ENCODE measurements at regions of chr15 and their contacts with region 1.

Region 1: DNA sequence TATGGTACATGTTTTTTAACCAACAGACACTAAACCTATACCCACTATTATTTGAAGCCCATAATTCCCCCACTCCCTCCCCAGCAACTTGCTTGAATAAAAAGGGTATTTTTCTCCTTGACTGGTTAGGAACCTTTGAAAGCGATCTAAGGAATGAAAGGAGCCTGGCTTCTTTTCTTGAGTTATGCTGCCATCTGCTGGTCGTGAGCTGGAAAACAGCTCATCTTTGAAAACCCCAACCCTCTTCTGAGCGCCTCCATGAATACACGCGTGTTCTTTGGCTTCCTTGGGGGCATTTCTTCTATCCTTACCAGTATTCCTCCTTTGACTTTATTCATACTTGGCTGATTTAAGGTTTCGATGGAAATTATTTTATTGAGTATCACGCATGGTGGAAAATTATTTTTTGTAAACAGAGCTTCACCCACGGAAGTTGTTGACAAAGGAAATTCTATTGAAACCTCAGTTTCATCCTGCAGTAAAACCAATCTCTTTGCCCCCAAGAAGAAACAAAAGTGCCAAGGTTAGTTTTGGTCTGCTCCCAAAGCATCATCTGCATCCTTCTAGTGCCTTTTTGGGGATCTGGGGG is 171.6 kb downstream of the SV2B start:
- DNase-seq: peak; percentile 65
- H3K4me3 Mint-ChIP-seq: no peak overlapping the region
- H3K27ac Mint-ChIP-seq: no peak overlapping the region
- H3K4me1 Mint-ChIP-seq: peaks cover 8% of the 10 kb centered on the region
- H3K27me3 Mint-ChIP-seq: peaks cover 23% of the 10 kb centered on the region

Region 2: GRCh38 chr15:90902040-90902839 is 369.4 kb before region 1 on chr15:
- CTCF ChIA-PET with region 1: no interaction called
- POLR2A ChIA-PET with region 1: no interaction called
- DNase-seq: peak; percentile 77
- H3K4me3 Mint-ChIP-seq: peak overlapping the region; percentile 80
- H3K27ac Mint-ChIP-seq: peak overlapping the region; percentile 81
- H3K4me1 Mint-ChIP-seq: peaks cover 40% of the 10 kb centered on the region
- H3K27me3 Mint-ChIP-seq: no peaks in the 10 kb centered on the region

Region 3: GRCh38 chr15:91055548-91056331 is 215.9 kb before region 1 on chr15:
- CTCF ChIA-PET with region 1: interaction called, 67 read pairs
- POLR2A ChIA-PET with region 1: no interaction called
- DNase-seq: peak; percentile 38
- H3K4me3 Mint-ChIP-seq: no peak overlapping the region
- H3K27ac Mint-ChIP-seq: no peak overlapping the region
- H3K4me1 Mint-ChIP-seq: no peaks in the 10 kb centered on the region
- H3K27me3 Mint-ChIP-seq: peaks cover 74% of the 10 kb centered on the region

Region 4: DNA sequence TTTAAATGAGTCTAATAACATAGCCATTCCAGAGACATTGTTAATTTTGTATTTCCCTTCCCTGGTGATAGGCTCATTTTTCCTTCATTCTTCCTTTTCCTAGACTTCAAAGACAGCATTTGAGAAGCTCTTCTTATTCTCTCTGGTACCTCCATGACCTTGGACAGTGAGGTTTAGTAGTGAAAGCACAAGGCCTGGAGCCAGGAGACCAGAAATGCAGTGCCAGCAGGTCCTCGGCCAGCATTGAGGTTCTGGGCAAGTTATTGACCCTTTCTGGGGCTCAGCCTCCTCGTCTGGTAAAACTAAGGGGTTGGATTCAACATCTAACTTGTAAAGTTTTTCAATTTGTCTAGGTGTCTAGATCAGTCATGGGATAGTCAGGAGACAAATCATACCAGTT is 24.7 kb before region 1 on chr15:
- CTCF ChIA-PET with region 1: interaction called, 28 read pairs
- POLR2A ChIA-PET with region 1: no interaction called
- DNase-seq: no peak
- H3K4me3 Mint-ChIP-seq: no peak overlapping the region
- H3K27ac Mint-ChIP-seq: no peak overlapping the region
- H3K4me1 Mint-ChIP-seq: no peaks in the 10 kb centered on the region
- H3K27me3 Mint-ChIP-seq: peaks cover 23% of the 10 kb centered on the region

Region 5: DNA sequence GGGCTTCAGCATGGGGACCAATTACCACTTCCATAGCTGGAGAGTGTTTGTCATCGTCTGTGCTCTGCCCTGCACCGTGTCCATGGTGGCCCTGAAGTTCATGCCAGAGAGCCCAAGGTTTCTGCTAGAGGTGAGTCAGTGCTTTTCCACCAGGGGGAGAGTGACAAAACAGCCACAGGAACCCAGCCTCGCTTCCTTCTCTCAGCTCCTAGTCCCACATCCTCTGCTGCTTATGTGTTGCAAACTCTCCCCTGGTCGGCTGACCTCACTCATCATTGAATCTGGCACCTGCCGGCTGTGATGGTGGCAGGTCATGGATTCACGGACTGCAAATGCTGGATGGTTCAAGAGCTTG is 13.3 kb before region 1 on chr15:
- CTCF ChIA-PET with region 1: interaction called, 45 read pairs
- POLR2A ChIA-PET with region 1: no interaction called
- DNase-seq: peak; percentile 19
- H3K4me3 Mint-ChIP-seq: no peak overlapping the region
- H3K27ac Mint-ChIP-seq: no peak overlapping the region
- H3K4me1 Mint-ChIP-seq: peaks cover 2% of the 10 kb centered on the region
- H3K27me3 Mint-ChIP-seq: peaks cover 14% of the 10 kb centered on the region

Region 6: DNA sequence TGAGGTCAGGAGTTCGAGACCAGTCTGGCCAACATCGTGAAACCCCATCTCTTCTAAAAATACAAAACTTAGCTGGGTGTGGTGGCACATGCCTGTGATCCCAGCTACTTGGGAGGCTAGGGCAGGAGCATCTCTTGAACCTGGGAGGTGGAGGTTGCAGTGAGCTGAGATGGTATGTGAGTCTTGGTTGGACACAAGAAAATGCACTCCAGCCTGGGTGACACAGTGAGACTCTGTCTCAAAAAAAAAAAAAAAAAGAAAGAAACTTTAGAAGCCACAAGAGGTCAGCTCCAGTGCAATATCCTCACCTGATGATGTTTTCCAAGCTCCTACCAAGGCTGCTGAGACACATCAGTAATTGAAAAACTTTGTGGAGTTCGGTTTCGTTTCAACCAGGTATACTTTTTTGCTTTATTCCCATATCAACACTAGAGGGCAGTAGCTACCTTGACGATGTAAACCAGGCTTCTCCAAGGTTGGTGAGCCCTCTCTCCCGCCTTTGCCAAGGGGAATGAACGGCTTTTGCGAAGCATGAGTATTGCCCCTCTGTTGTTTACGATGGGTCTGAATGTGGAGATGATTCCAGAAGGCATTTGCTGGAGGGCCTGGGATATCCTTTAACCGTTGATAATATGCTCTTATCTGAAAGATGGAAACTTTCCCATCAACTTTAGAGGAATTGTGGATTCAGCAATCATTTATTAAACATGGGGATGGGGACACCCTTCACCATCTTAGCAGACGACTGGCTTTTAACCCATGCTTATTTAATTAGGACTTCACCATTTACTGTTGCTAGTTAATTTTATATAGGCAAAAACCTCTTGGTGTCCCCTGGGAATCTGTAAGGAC is 31.2 kb after region 1 on chr15:
- CTCF ChIA-PET with region 1: interaction called, 11 read pairs
- POLR2A ChIA-PET with region 1: no interaction called
- DNase-seq: no peak
- H3K4me3 Mint-ChIP-seq: no peak overlapping the region
- H3K27ac Mint-ChIP-seq: no peak overlapping the region
- H3K4me1 Mint-ChIP-seq: peaks cover 10% of the 10 kb centered on the region
- H3K27me3 Mint-ChIP-seq: peaks cover 52% of the 10 kb centered on the region

Measured in activated CD4-positive, alpha-beta memory T cell treated with anti-CD3 and anti-CD28 coated beads, Interleukin-2, amount 10 ng/mL, durations not matched to agents 7 days and 5 days (primary cell).